ENCODE measurements at regions of chr12 and their contacts with region 1.

Region 1: GRCh38 chr12:116990971-116991966 is 80.5 kb downstream of the FBXW8 start:
- DNase-seq: no peak
- H3K27ac ChIP-seq: no peak overlapping the region
- CTCF ChIP-seq: no peak

Region 2: DNA sequence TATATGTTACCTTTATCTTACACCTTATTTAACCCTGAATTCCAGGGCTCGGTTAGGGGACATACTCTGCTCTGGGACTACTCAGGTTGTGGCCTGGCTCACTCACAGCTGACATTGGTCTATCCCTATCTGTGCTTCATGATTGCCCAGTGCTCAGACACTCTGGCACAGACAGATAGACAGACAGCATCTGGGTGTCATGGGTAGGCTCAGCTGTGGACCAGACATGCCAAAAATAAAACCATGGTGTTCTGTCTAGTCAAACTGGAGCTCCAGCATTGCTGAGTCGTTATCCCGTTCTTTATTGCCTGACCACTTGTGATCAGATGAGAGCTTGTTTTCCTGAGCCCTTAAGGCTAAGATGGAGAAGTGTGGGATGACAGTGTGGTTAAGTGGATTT is 51.5 kb before region 1 on chr12:
- CTCF ChIA-PET with region 1: no interaction called
- POLR2A ChIA-PET with region 1: interaction called, 11 read pairs
- DNase-seq: no peak
- H3K27ac ChIP-seq: no peak overlapping the region
- CTCF ChIP-seq: no peak

Region 3: GRCh38 chr12:116977465-116978380 is 13.5 kb before region 1 on chr12:
- CTCF ChIA-PET with region 1: no interaction called
- POLR2A ChIA-PET with region 1: no interaction called
- DNase-seq: no peak
- H3K27ac ChIP-seq: no peak overlapping the region
- CTCF ChIP-seq: no peak

Measured in RWPE1 (cell line).